Caco-2 (cell line): ENCODE measurements at regions of chr2 and their contacts with region 1.

Region 1: DNA sequence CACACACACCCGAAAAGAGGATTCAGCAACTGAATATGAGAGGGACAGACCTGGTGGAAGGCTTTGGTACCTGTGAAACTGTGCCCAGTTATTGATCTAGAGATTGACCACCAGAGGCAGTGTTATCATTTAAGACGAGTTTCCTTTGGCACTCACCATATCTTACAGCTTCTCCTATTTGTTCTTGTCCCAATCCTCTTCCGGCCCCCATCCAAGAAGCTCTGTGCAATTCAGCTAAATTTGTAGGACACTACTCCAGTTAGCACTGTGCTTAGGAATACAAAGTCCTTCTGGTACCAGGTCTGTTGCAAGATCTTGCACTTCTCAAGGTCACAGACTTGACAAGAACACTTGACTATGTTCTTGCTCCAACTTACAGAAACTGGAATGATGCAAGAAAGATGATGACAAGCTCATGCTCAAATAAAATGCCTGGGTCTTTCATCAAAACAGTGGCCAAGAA is 177.7 kb downstream of the TMEM247 start:
- DNase-seq: peak in 1 of 2 experiments; percentile 25
- H3K4me3 ChIP-seq: no peak overlapping the region
- H3K4me3 Mint-ChIP-seq: no peak overlapping the region
- H3K27ac Mint-ChIP-seq: no peak overlapping the region
- H3K4me1 ChIP-seq: no peaks in the 10 kb centered on the region
- H3K4me1 Mint-ChIP-seq: peaks cover 6% of the 10 kb centered on the region
- H3K27me3 ChIP-seq: no peaks in the 10 kb centered on the region
- H3K27me3 Mint-ChIP-seq: no peaks in the 10 kb centered on the region
- CTCF ChIP-seq: peak; percentile 23 to 59

Region 2: DNA sequence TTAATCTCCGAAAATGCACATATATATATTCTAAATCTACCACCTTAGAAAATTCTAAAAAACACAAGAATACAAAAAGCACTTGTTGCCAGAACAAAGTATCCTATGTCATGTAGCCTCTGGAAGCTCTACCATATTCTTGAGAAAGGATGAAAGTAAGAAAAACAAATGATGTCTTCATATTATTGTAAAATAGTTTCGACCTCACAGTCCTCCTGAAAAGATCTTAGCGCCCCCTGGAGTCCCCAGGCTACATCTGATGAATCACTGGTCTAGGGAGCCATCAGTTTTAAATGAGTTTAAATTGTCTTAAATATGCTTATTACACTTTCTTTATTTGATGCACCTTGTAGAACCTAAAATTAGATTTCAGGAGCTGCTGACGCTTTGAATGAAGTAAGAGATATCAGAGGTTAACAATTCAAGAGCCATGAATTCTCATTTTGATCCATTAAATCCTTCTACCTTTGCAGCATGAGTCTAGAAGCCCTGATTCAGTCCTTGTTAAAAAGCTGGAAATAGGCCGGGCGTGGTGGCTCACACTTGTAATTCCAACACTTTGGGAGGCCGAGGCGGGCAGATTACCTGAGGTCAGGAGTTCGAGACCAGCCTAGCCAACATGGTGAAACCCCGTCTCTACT is 119.7 kb after region 1 on chr2:
- CTCF ChIA-PET with region 1: interaction called, 3 read pairs
- POLR2A ChIA-PET with region 1: no interaction called
- intact Hi-C with region 1: loop called (anchors 1 kb)
- DNase-seq: peak; percentile 54 to 72
- H3K4me3 ChIP-seq: no peak overlapping the region
- H3K4me3 Mint-ChIP-seq: no peak overlapping the region
- H3K27ac Mint-ChIP-seq: no peak overlapping the region
- H3K4me1 ChIP-seq: no peaks in the 10 kb centered on the region
- H3K4me1 Mint-ChIP-seq: no peaks in the 10 kb centered on the region
- H3K27me3 ChIP-seq: no peaks in the 10 kb centered on the region
- H3K27me3 Mint-ChIP-seq: no peaks in the 10 kb centered on the region
- CTCF ChIP-seq: peak; percentile 57 to 89

Region 3: GRCh38 chr2:46876741-46877384 is 219.8 kb after region 1 on chr2:
- CTCF ChIA-PET with region 1: no interaction called
- POLR2A ChIA-PET with region 1: interaction called, 3 read pairs
- intact Hi-C with region 1: loop called (anchors 1 kb)
- DNase-seq: peak; percentile 42 to 50
- H3K4me3 ChIP-seq: no peak overlapping the region
- H3K4me3 Mint-ChIP-seq: no peak overlapping the region
- H3K27ac Mint-ChIP-seq: no peak overlapping the region
- H3K4me1 ChIP-seq: peaks cover 14% of the 10 kb centered on the region
- H3K4me1 Mint-ChIP-seq: peaks cover 10% of the 10 kb centered on the region
- H3K27me3 ChIP-seq: no peaks in the 10 kb centered on the region
- H3K27me3 Mint-ChIP-seq: no peaks in the 10 kb centered on the region
- CTCF ChIP-seq: peak; percentile 43 to 48